Dorsolateral prefrontal cortex (tissue), 120 donors: ENCODE measurements at regions of chr5 and their contacts with region 1.

Region 1: DNA sequence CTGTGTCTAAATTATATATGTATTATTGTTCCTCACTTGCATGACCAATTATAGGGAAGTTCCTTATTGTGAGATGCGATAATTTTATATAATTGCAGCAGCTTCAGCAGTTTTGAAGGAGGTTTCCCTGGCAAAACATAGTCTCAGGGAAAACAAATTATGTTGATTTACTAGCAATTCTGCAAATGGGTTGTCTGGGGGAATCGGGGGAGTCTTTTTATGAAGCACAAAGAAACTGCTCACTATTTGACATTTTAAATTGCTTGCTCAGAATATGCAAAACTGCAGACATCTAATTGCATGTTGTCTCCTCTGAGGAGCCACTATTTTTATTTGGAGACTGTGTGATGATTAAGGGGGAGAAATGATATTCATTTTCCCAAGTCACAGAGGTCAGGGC is 361.6 kb downstream of the YTHDC2 start:
- DNase-seq: no peak
- H3K4me3 ChIP-seq: no peak overlapping the region
- H3K27ac ChIP-seq: no peak overlapping the region
- H3K27me3 ChIP-seq: peaks cover 0 to 4% (median 0%) of the 10 kb centered on the region in 45 donors
- CTCF ChIP-seq: no peak

Region 2: GRCh38 chr5:113760486-113760885 is 114.6 kb before region 1 on chr5:
- intact Hi-C with region 1: no loop called
- DNase-seq: no peak
- H3K4me3 ChIP-seq: no peak overlapping the region
- H3K27ac ChIP-seq: no peak overlapping the region
- H3K27me3 ChIP-seq: peaks cover 0 to 6% (median 0%) of the 10 kb centered on the region in 45 donors
- CTCF ChIP-seq: no peak

Region 3: DNA sequence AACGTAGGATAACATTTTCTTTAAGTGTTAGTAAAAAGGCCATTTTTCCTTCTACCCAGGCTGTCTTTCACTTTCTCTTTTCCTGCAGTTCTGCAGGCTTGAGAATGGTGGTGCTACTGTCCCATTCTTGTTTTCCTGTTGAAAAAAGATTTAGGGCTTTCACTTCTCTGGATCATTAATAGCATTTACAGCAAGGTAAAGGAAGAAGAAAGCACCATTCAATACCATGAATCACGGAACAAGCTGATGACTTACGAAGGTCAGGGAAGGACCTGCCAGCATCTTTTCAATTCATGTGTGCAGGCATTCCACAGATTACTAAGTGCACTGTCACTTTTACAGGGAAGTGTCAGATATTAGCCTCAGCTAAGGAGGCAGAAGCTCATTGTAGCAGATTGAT is 68.8 kb before region 1 on chr5:
- intact Hi-C with region 1: no loop called
- DNase-seq: no peak
- H3K4me3 ChIP-seq: peak overlapping the region in 12 of 59 donors; percentile 2 to 23 (median 16)
- H3K27ac ChIP-seq: peak overlapping the region in 5 of 59 donors; percentile 16 to 71 (median 54)
- H3K27me3 ChIP-seq: peaks cover 0 to 2% (median 0%) of the 10 kb centered on the region in 45 donors
- CTCF ChIP-seq: peak in 47 of 56 donors; percentile 14 to 70 (median 45)

Region 4: DNA sequence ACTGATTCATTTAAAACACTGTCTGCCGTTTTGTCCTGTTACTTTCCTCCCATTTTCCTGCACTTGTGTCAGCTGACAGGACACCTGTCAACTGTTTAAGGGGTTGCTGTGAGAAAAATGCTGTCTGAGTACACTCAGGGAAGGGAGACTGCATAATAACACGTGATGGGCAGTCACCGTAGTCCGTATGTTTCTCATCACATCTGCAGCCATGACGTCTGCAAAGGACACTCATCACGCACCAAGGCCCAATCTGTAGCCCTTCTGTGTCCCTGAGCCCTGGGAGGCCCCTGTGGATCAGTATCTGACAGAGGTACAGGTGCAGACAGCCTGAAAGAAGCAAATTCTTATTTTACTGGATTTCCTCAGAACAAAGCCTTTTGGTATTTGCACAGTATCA is 34.7 kb after region 1 on chr5:
- intact Hi-C with region 1: loop called in 1 of 2 experiments (anchors 5 kb)
- DNase-seq: no peak
- H3K4me3 ChIP-seq: no peak overlapping the region
- H3K27ac ChIP-seq: no peak overlapping the region
- H3K27me3 ChIP-seq: peaks cover 0 to 6% (median 0%) of the 10 kb centered on the region in 45 donors
- CTCF ChIP-seq: no peak